Natural killer cell (primary cell): ENCODE measurements at regions of chr2 and their contacts with region 1.

Region 1: GRCh38 chr2:169584005-169584877 is at the start of gene PPIG:
- DNase-seq: peak; percentile 85 to 97
- ATAC-seq: peak; percentile 86 to 93 (median 87)
- H3K4me3 ChIP-seq: peak within 1 kb of the TSS; percentile 98
- H3K4me3 Mint-ChIP-seq: peak within 1 kb of the TSS; percentile 96
- H3K27ac ChIP-seq: peak within 1 kb of the TSS; percentile 99
- H3K27ac Mint-ChIP-seq: peak within 1 kb of the TSS; percentile 97 to 99
- H3K4me1 ChIP-seq: peaks cover 10% of the 10 kb centered on the region
- H3K4me1 Mint-ChIP-seq: peaks cover 31 to 32% of the 10 kb centered on the region in 2 donors
- H3K27me3 ChIP-seq: no peaks in the 10 kb centered on the region
- H3K27me3 Mint-ChIP-seq: no peaks in the 10 kb centered on the region
- CTCF ChIP-seq: no peak
- total RNA-seq, gene PPIG: 42.2 to 58.3 (median 56.1) TPM

Region 2: GRCh38 chr2:169573160-169573973 is 10.9 kb before region 1 on chr2 and contains the start of gene FASTKD1:
- intact Hi-C with region 1: loop called (anchors 1 kb)
- DNase-seq: peak; percentile 73 to 94
- ATAC-seq: peak; percentile 100
- H3K4me3 ChIP-seq: peak within 1 kb of the TSS; percentile 89
- H3K4me3 Mint-ChIP-seq: peak within 1 kb of the TSS; percentile 98
- H3K27ac ChIP-seq: peak within 1 kb of the TSS; percentile 68
- H3K27ac Mint-ChIP-seq: peak within 1 kb of the TSS; percentile 91 to 93
- H3K4me1 ChIP-seq: peaks cover 5% of the 10 kb centered on the region
- H3K4me1 Mint-ChIP-seq: peaks cover 12 to 14% of the 10 kb centered on the region in 2 donors
- H3K27me3 ChIP-seq: no peaks in the 10 kb centered on the region
- H3K27me3 Mint-ChIP-seq: no peaks in the 10 kb centered on the region
- CTCF ChIP-seq: no peak
- total RNA-seq, gene FASTKD1: 10.9 to 14.1 (median 12.5) TPM

Region 3: GRCh38 chr2:169824373-169825333 is 240.4 kb after region 1 on chr2 and contains the start of gene METTL5:
- intact Hi-C with region 1: loop called (anchors 10 kb)
- DNase-seq: peak; percentile 78 to 89
- ATAC-seq: peak; percentile 71 to 84 (median 75)
- H3K4me3 ChIP-seq: peak within 1 kb of the TSS; percentile 90
- H3K4me3 Mint-ChIP-seq: peak within 1 kb of the TSS; percentile 94
- H3K27ac ChIP-seq: peak within 1 kb of the TSS; percentile 63
- H3K27ac Mint-ChIP-seq: peak within 1 kb of the TSS; percentile 77 to 87
- H3K4me1 ChIP-seq: peaks cover 28% of the 10 kb centered on the region
- H3K4me1 Mint-ChIP-seq: peaks cover 62 to 65% of the 10 kb centered on the region in 2 donors
- H3K27me3 ChIP-seq: no peaks in the 10 kb centered on the region
- H3K27me3 Mint-ChIP-seq: no peaks in the 10 kb centered on the region
- CTCF ChIP-seq: peak; percentile 94
- total RNA-seq, gene METTL5: 14.7 to 28.2 (median 21.3) TPM